A673 (cell line): ENCODE measurements at regions of chr2 and their contacts with region 1.

Region 1: DNA sequence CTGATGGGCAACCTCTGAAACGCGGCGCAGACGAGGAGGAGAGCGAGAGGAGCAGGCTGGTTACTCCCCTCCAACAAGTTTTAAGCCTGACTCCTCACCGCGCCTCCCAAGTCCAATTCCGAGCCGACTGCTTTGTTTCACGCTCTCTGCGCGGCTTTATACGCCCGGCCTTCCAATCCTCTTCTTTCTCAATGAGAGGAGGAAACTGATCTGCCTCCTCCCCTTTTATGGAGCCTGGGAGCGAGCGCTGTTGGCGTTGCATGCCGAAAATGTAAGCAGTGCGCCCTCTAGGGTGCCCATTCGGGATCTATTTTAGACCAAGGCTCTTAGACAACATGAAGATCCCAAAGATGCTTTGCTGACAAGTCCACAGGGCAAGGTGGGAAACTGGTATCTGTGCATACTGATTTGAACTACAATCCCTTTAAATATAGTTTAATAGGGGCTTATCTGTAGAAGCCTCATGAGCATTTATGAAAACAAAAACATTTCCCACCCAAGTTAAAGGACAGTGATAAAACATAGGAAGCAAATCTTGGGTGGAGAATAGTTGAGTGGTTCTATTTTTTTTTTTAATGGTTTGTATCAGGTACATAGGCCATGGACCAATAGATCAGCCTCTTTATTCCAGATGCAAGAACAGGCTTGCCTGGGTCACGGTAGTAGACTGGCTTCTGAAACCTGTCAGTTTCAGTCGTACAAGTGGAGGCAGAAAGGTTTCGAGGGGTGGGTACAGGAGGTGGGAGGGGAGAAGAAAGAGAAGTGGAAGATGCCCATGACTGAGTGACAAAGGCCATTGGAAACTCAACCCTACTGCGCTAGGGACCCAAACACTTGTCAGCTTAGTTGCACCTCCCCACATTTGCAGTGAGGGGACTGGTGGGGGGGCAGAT is at the start of gene RND3:
- DNase-seq: peak; percentile 99
- H3K4me3 ChIP-seq: peak within 1 kb of the TSS; percentile 67
- H3K27ac ChIP-seq: peak within 1 kb of the TSS; percentile 61
- H3K4me1 ChIP-seq: peaks cover 9% of the 10 kb centered on the region
- H3K27me3 ChIP-seq: no peaks in the 10 kb centered on the region
- CTCF ChIP-seq: peak; percentile 92
- total RNA-seq, gene RND3: 10.2 and 15.0 TPM in 2 replicates

Region 2: DNA sequence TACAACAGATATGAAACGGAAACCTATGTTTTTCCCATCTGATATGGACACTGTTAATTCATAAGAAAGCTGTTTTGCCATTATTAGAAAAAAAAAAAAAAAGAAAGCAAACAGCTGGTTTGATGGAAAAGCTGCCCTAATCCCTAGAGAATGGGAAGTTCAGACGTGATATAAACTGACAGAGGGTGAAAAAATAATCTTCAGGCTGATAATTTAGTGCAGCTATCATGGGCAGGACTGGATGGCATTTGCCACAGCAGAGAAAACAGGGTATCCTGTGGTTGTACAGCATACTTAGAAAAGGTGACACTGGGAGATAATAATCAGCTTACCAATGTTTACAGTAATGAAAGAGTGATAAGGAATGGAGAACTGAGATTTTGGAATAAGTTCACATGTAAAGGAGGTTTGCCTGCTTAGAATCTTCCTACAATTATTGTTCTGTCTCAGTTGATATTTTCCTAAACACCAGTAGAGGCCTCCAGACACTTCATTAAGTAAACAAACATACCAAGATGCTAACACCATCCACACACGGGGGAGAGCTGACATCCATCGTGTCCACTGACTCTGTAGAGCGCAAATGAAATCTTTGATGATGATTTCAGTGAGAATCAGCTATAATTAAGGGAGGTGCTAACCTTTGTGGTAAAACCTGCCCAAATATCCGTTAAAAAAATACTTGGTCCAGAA is 688.6 kb before region 1 on chr2:
- CTCF ChIA-PET with region 1: no interaction called
- POLR2A ChIA-PET with region 1: no interaction called
- intact Hi-C with region 1: loop called (anchors 2 kb)
- DNase-seq: peak; percentile 41
- H3K4me3 ChIP-seq: no peak overlapping the region
- H3K27ac ChIP-seq: no peak overlapping the region
- H3K4me1 ChIP-seq: no peaks in the 10 kb centered on the region
- H3K27me3 ChIP-seq: no peaks in the 10 kb centered on the region
- CTCF ChIP-seq: peak; percentile 48

Region 3: DNA sequence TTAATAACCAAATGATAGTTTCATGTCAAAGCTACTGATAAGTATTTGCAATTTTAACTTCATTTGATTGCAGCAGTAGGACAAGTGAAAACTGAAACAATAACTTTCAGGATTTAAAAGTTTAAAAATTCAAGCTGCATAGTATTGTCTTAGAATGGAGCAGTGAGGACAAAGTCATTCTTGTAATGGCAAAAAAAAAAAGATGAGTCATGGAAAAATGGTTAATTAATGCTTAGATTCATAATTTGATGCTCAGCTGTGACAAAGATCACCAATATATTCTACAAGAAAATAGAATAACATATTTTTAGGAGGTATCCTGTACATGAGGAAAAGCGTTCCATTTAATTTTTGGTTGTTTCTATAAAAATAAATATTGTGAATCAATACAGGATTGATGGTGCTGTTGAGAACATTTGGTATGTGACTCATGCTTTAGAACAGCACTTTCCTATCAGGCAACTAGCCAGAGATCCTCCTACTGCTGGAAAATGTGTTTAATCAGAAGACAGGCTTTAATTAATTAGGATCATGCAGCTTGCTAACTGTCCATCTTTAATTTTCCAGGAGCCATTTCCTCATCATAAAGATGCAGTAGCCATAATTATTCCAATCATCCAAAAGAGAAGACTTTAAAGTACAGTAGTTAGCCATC is 661.2 kb before region 1 on chr2:
- CTCF ChIA-PET with region 1: no interaction called
- POLR2A ChIA-PET with region 1: no interaction called
- intact Hi-C with region 1: loop called (anchors 1 kb)
- DNase-seq: peak; percentile 55
- H3K4me3 ChIP-seq: no peak overlapping the region
- H3K27ac ChIP-seq: no peak overlapping the region
- H3K4me1 ChIP-seq: peaks cover 36% of the 10 kb centered on the region
- H3K27me3 ChIP-seq: no peaks in the 10 kb centered on the region
- CTCF ChIP-seq: no peak

Region 4: DNA sequence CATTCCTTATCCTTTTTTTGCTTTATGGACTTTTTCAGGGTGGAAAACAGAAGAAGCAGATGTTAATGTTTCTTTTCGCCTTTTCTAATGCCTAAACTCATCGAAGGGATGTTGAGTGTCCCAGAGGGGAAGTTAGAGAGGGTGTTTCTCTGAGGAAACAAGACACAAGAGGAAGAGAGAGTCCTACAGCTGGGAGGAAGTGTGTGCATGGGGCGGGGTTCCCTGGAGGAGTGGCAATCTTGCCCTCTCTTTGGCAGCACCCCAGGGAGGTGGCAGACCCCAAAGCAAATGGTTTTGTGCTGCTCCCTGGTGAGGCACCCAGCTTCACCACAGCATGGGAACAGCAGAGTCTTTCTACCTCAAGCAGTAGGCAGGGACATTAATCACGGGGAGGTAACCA is 377.9 kb before region 1 on chr2:
- CTCF ChIA-PET with region 1: no interaction called
- POLR2A ChIA-PET with region 1: no interaction called
- intact Hi-C with region 1: no loop called
- DNase-seq: no peak
- H3K4me3 ChIP-seq: no peak overlapping the region
- H3K27ac ChIP-seq: no peak overlapping the region
- H3K4me1 ChIP-seq: no peaks in the 10 kb centered on the region
- H3K27me3 ChIP-seq: no peaks in the 10 kb centered on the region
- CTCF ChIP-seq: no peak

Region 5: DNA sequence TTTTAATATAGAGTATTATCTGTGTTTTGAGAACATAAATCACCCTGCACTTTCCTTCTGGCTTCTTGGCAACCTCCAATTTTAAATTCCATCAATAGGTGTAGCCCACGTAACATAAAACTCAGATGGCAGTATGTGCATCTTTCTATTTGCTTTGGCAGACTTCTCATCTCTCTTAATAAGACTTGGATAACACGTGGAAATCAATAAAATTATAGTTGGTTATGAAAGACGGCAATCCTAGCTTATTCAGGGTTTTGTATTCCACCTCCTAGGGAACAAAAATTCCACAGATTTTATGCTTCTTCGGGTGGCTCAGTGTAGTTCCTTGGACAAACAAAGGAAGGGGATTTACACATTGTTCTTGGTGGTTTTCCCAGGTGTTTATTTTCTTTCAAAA is 299.6 kb before region 1 on chr2:
- CTCF ChIA-PET with region 1: no interaction called
- POLR2A ChIA-PET with region 1: no interaction called
- intact Hi-C with region 1: loop called (anchors 5 kb)
- DNase-seq: no peak
- H3K4me3 ChIP-seq: no peak overlapping the region
- H3K27ac ChIP-seq: no peak overlapping the region
- H3K4me1 ChIP-seq: no peaks in the 10 kb centered on the region
- H3K27me3 ChIP-seq: no peaks in the 10 kb centered on the region
- CTCF ChIP-seq: no peak

Region 6: GRCh38 chr2:150528861-150529801 is 41.3 kb after region 1 on chr2:
- CTCF ChIA-PET with region 1: no interaction called
- POLR2A ChIA-PET with region 1: no interaction called
- intact Hi-C with region 1: loop called (anchors 1 kb)
- DNase-seq: peak; percentile 67
- H3K4me3 ChIP-seq: no peak overlapping the region
- H3K27ac ChIP-seq: no peak overlapping the region
- H3K4me1 ChIP-seq: peaks cover 12% of the 10 kb centered on the region
- H3K27me3 ChIP-seq: no peaks in the 10 kb centered on the region
- CTCF ChIP-seq: no peak

Region 7: GRCh38 chr2:150872756-150873395 is 385.1 kb after region 1 on chr2:
- CTCF ChIA-PET with region 1: no interaction called
- POLR2A ChIA-PET with region 1: no interaction called
- intact Hi-C with region 1: loop called (anchors 5 kb)
- DNase-seq: no peak
- H3K4me3 ChIP-seq: no peak overlapping the region
- H3K27ac ChIP-seq: no peak overlapping the region
- H3K4me1 ChIP-seq: no peaks in the 10 kb centered on the region
- H3K27me3 ChIP-seq: no peaks in the 10 kb centered on the region
- CTCF ChIP-seq: no peak